K562 (cell line): ENCODE measurements at regions of chr16 and their contacts with region 1.

Region 1: GRCh38 chr16:12095275-12096156 is 119.0 kb downstream of the SNX29 start:
- DNase-seq: peak; percentile 69 to 77 (median 76)
- ATAC-seq: peak; percentile 56
- H3K4me3 ChIP-seq: no peak overlapping the region
- H3K27ac ChIP-seq: no peak overlapping the region
- H3K4me1 ChIP-seq: peaks cover 17 to 24% of the 10 kb centered on the region in 2 experiments; a peak in 4 of 5 replicates
- H3K27me3 ChIP-seq: no peaks in the 10 kb centered on the region; a peak in 2 of 5 replicates
- CTCF ChIP-seq: peak; percentile 85 to 92 (median 90)
- EP300 ChIP-seq: no peak
- POLR2A ChIP-seq: no peak
- RAD21 ChIP-seq: peak; percentile 79 to 88

Region 2: GRCh38 chr16:12178251-12178990 is 82.9 kb after region 1 on chr16:
- CTCF ChIA-PET with region 1: no interaction called
- POLR2A ChIA-PET with region 1: interaction called, 3 read pairs
- in situ Hi-C with region 1: no loop called
- intact Hi-C with region 1: loop called (anchors 10 kb)
- DNase-seq: no peak
- ATAC-seq: no peak
- H3K4me3 ChIP-seq: no peak overlapping the region
- H3K27ac ChIP-seq: no peak overlapping the region
- H3K4me1 ChIP-seq: no peaks in the 10 kb centered on the region
- H3K27me3 ChIP-seq: peaks cover 0 to 24% of the 10 kb centered on the region in 2 experiments; a peak in 2 of 5 replicates
- CTCF ChIP-seq: no peak
- EP300 ChIP-seq: no peak
- POLR2A ChIP-seq: no peak
- RAD21 ChIP-seq: no peak

Region 3: GRCh38 chr16:12257926-12258561 is 162.5 kb after region 1 on chr16:
- CTCF ChIA-PET with region 1: interaction called, 4 read pairs
- POLR2A ChIA-PET with region 1: interaction called, 3 read pairs
- in situ Hi-C with region 1: loop called (anchors 10 kb)
- intact Hi-C with region 1: loop called (anchors 2 kb)
- DNase-seq: peak in 3 of 4 experiments; percentile 23 to 40 (median 27)
- ATAC-seq: peak; percentile 83
- H3K4me3 ChIP-seq: no peak overlapping the region
- H3K27ac ChIP-seq: no peak overlapping the region
- H3K4me1 ChIP-seq: peaks cover 0 to 18% of the 10 kb centered on the region in 2 experiments; a peak in 2 of 5 replicates
- H3K27me3 ChIP-seq: peaks cover 8 to 63% of the 10 kb centered on the region in 2 experiments; a peak in 4 of 5 replicates
- CTCF ChIP-seq: peak; percentile 54 to 59 (median 55); a peak in 5 of 6 replicates
- EP300 ChIP-seq: no peak
- POLR2A ChIP-seq: no peak
- RAD21 ChIP-seq: peak in 1 of 2 experiments; percentile 69; a peak in 2 of 4 replicates

Region 4: GRCh38 chr16:12271006-12271405 is 175.5 kb after region 1 on chr16:
- CTCF ChIA-PET with region 1: no interaction called
- POLR2A ChIA-PET with region 1: interaction called, 3 read pairs
- in situ Hi-C with region 1: loop called (anchors 10 kb)
- intact Hi-C with region 1: loop called (anchors 1 kb)
- DNase-seq: peak; percentile 37 to 68 (median 46)
- ATAC-seq: peak; percentile 97
- H3K4me3 ChIP-seq: no peak overlapping the region
- H3K27ac ChIP-seq: no peak overlapping the region
- H3K4me1 ChIP-seq: no peaks in the 10 kb centered on the region; a peak in 1 of 5 replicates
- H3K27me3 ChIP-seq: peaks cover 12 to 19% of the 10 kb centered on the region in 2 experiments; a peak in 4 of 5 replicates
- CTCF ChIP-seq: peak; percentile 62 to 68 (median 66)
- EP300 ChIP-seq: no peak
- POLR2A ChIP-seq: no peak
- RAD21 ChIP-seq: peak; percentile 50 to 76

Region 5: DNA sequence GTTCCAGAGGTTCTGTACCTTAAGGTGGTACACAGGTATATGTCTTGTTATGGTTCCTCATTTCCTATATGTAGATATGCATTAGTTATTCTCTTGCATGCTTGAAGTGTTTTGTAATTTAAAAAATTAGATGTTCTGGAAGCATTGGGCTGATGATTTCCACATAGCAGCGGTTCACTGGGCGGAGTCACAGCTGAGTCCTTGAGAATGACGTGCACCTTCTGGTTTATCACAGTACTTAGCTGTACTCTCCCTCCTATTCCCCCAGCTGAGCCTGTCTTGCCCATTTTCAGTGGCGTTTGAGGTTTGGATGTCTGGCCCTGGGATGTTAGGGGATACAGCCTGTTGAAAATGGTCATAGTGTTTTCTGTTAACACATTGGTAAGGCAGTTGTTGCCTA is 208.1 kb after region 1 on chr16:
- CTCF ChIA-PET with region 1: no interaction called
- POLR2A ChIA-PET with region 1: no interaction called
- in situ Hi-C with region 1: no loop called
- intact Hi-C with region 1: no loop called
- DNase-seq: peak in 1 of 4 experiments; percentile 12
- ATAC-seq: 0 out of 3 replicates have a peak, but pooled peaks have one; percentile 44
- H3K4me3 ChIP-seq: no peak overlapping the region
- H3K27ac ChIP-seq: no peak overlapping the region
- H3K4me1 ChIP-seq: no peaks in the 10 kb centered on the region
- H3K27me3 ChIP-seq: peaks cover 17 to 18% of the 10 kb centered on the region in 2 experiments
- CTCF ChIP-seq: no peak
- EP300 ChIP-seq: no peak
- POLR2A ChIP-seq: no peak
- RAD21 ChIP-seq: no peak